ENCODE measurements at regions of chr20 and their contacts with region 1.

Region 1: GRCh38 chr20:47620808-47621805 is 119.4 kb downstream of the NCOA3 start:
- DNase-seq: peak; percentile 69
- H3K4me3 ChIP-seq: no peak overlapping the region
- CTCF ChIP-seq: peak; percentile 71

Region 2: GRCh38 chr20:46959081-46959692 is 661.9 kb before region 1 on chr20:
- in situ Hi-C with region 1: no loop called
- DNase-seq: peak; percentile 76
- H3K4me3 ChIP-seq: no peak overlapping the region
- CTCF ChIP-seq: no peak

Region 3: DNA sequence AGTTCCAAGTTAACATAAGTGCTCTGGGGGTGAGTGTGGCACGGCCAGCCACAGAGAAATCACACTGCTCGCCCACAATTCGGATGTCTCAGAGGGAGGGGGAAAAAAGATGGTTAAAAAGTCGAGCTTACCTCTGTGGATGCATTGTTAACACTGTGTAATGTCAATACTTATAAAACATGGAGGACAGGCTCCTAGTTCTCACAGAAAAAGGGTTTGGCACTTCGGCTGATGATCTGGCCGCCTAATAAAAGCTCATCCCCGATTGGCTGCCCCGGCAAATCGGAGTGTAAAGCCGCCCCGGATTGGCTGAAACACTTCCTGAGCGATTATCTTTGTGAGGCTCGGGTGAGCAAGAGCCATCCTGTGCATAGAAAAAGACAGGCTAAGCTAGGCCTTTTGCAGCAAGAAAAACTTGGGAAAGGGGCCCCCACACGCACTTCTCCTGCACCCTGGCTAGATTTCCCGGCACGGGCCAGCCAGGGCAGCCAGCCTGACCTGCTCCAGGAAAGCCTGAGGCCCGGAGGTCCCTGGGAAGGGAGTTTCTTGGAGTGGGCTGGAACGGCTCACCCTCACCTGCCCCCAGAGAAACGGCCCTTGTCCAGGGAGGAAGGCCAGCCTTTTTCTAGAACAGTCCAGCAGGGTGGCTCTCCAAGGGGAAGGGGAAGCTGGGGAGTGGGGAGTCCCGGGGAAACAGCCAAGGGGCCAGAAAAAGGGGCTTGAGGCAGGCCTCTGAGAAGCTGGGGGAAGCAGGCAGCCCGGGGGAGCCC is 264.4 kb before region 1 on chr20 and contains the start of gene ZMYND8:
- in situ Hi-C with region 1: loop called (anchors 25 kb)
- DNase-seq: peak; percentile 77
- H3K4me3 ChIP-seq: peak within 1 kb of the TSS; percentile 17
- CTCF ChIP-seq: no peak

Measured in astrocyte of the cerebellum (primary cell).